ENCODE measurements at regions of chr1 and their contacts with region 1.

Region 1: GRCh38 chr1:175481126-175482066 is 262.0 kb downstream of the TNR start:
- DNase-seq: peak; percentile 9
- H3K4me3 ChIP-seq: no peak overlapping the region
- H3K27ac ChIP-seq: no peak overlapping the region
- H3K4me1 ChIP-seq: no peaks in the 10 kb centered on the region
- H3K27me3 ChIP-seq: peaks cover 7% of the 10 kb centered on the region
- CTCF ChIP-seq: peak; percentile 51 to 63

Region 2: DNA sequence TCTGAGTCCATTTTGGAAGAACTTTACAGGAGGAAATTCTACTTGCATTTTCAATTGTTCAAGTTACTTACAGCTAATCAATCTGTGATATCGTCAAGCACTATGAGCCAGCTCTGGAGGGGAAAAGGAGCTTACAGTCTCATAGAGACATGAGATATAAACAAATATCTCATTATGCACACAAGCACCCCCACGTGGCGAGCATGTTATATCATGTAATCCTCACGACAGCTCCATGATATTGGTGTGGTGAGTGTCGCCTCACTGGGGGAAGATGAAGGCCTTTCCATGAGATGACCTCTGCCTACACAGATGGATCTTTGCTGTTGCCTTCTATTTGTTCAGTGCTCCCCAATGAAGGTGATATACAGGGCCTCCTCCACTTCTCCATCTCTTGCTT is 227.4 kb after region 1 on chr1:
- CTCF ChIA-PET with region 1: no interaction called
- dilution Hi-C with region 1: no loop called
- in situ Hi-C with region 1: no loop called
- intact Hi-C with region 1: loop called (anchors 2 kb)
- DNase-seq: no peak
- H3K4me3 ChIP-seq: no peak overlapping the region
- H3K27ac ChIP-seq: no peak overlapping the region
- H3K4me1 ChIP-seq: no peaks in the 10 kb centered on the region
- H3K27me3 ChIP-seq: peaks cover 3% of the 10 kb centered on the region
- CTCF ChIP-seq: peak in 1 of 2 donors; percentile 22

Region 3: DNA sequence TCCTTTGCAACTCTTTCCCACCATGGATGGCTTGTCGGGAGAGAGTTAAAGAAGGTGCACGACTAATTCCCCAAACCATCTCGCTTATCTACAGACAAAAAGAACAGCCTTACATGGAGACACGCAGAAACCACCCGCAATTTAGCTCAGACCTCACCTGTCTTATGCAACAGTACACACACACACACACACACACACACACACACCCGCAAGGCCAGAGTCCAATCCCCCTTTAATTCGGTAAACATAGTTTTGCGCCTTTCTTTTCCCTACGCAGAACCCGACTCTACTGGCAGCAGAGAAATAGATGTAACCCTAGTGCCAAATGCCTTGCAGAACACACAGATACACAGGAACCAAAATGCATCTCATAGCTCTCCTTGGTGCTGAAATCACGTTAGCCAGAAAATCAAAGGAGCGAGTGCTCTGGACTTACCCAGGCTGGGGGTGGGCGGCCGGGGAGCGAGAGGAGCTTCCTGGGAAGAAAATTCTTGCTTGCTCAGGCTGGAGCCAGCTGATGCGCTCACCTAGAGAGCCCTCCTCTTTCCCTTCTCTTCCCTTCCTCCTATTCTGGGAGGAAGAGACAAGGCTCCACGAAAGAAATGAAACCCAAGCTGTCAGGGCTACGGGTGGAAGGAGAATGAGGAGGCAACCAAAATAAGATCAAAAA is 261.5 kb after region 1 on chr1:
- CTCF ChIA-PET with region 1: no interaction called
- dilution Hi-C with region 1: no loop called
- in situ Hi-C with region 1: no loop called
- intact Hi-C with region 1: loop called (anchors 1 kb)
- DNase-seq: peak; percentile 45
- H3K4me3 ChIP-seq: no peak overlapping the region
- H3K27ac ChIP-seq: no peak overlapping the region
- H3K4me1 ChIP-seq: no peaks in the 10 kb centered on the region
- H3K27me3 ChIP-seq: no peaks in the 10 kb centered on the region
- CTCF ChIP-seq: no peak

Region 4: DNA sequence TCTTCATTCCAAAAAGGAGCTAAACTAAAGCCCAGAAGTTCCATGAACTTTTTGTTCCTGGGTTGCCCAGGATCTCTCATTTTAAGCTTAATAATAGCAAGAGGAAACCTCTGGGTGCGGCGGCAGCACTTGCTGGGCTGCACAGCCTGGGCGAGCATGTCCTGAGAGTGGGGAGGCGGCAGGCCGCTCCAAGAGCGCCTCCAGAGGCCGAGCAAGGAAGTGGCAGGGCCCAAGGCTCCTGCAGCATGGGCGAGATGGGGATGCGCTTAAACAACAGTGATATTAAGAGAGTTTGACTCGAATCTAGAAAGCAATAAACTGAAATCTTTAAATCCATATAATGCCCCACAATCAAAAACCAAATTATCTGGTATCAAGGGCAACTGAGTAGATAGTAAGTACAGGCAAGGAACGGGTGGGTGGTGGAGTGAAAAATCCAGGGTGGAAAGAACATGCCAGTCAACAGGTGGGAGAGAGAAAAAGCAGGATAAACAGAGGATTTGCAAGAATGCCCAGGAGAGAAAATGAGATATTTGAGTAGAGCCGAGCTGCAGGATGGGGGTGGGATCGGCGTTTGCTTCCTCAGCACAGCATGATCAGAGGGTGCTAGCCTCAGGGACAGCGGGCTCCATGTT is 276.1 kb after region 1 on chr1:
- CTCF ChIA-PET with region 1: no interaction called
- dilution Hi-C with region 1: no loop called
- in situ Hi-C with region 1: no loop called
- intact Hi-C with region 1: loop called (anchors 5 kb)
- DNase-seq: peak; percentile 13
- H3K4me3 ChIP-seq: no peak overlapping the region
- H3K27ac ChIP-seq: no peak overlapping the region
- H3K4me1 ChIP-seq: no peaks in the 10 kb centered on the region
- H3K27me3 ChIP-seq: no peaks in the 10 kb centered on the region
- CTCF ChIP-seq: peak; percentile 83 to 85

Region 5: GRCh38 chr1:175887981-175888433 is 406.6 kb after region 1 on chr1:
- CTCF ChIA-PET with region 1: no interaction called
- dilution Hi-C with region 1: no loop called
- in situ Hi-C with region 1: loop called in 1 of 2 experiments (anchors 25 kb)
- intact Hi-C with region 1: no loop called
- DNase-seq: peak; percentile 11
- H3K4me3 ChIP-seq: no peak overlapping the region
- H3K27ac ChIP-seq: no peak overlapping the region
- H3K4me1 ChIP-seq: no peaks in the 10 kb centered on the region
- H3K27me3 ChIP-seq: no peaks in the 10 kb centered on the region
- CTCF ChIP-seq: peak; percentile 91

Region 6: GRCh38 chr1:176073524-176074157 is 592.2 kb after region 1 on chr1:
- CTCF ChIA-PET with region 1: no interaction called
- dilution Hi-C with region 1: no loop called
- in situ Hi-C with region 1: loop called in 1 of 2 experiments (anchors 25 kb)
- intact Hi-C with region 1: loop called (anchors 2 kb)
- DNase-seq: peak; percentile 48
- H3K4me3 ChIP-seq: no peak overlapping the region
- H3K27ac ChIP-seq: no peak overlapping the region
- H3K4me1 ChIP-seq: no peaks in the 10 kb centered on the region
- H3K27me3 ChIP-seq: no peaks in the 10 kb centered on the region
- CTCF ChIP-seq: peak; percentile 68 to 73